GM12878 (cell line): ENCODE measurements at regions of chr14 and their contacts with region 1.

Region 1: DNA sequence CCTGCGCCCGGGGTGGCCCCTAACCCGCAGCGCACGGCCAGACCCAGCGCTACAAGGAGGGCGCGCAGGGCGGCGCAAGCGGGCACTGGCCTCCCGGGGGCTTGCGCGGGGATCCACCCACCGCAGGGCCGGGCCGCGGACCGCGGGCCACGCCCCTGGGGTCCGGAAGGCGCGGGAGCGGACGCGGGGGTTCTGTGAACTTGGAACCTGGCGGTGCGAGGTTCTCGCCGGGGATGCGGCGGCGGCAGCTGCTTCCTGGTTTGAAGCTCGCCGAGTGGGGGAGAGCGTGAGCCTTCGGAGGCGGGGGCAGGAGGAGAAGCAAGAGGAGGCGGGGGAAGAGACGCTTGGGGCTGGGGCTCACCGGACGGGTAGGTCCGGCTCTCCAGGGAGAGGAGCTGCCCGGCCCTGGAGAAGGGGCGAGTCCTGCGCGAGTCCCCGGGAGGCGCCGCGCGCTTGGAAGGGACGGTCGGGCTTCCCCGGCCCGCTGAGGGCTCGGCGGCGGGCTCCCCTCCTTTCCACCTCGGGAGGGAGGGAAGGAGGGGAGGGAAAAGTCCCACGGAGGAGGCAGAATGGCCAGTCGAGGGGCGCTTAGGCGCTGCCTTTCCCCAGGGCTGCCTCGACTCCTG is at the start of gene PRKCH:
- DNase-seq: no peak
- ATAC-seq: peak; percentile 81
- H3K4me3 ChIP-seq: peak within 1 kb of the TSS; percentile 95
- H3K27ac ChIP-seq: peak within 1 kb of the TSS; percentile 80
- H3K4me1 ChIP-seq: peaks cover 6% of the 10 kb centered on the region; the same call in 1 of the 2 replicates
- H3K27me3 ChIP-seq: no peaks in the 10 kb centered on the region; a peak in 1 of 4 replicates
- CTCF ChIP-seq: peak; percentile 3 to 50 (median 20); a peak in 3 of 6 replicates
- EP300 ChIP-seq: no peak
- POLR2A ChIP-seq: peak; percentile 84
- RAD21 ChIP-seq: peak; percentile 41
- polyA plus RNA-seq, gene PRKCH: 10.7 to 12.0 TPM

Region 2: DNA sequence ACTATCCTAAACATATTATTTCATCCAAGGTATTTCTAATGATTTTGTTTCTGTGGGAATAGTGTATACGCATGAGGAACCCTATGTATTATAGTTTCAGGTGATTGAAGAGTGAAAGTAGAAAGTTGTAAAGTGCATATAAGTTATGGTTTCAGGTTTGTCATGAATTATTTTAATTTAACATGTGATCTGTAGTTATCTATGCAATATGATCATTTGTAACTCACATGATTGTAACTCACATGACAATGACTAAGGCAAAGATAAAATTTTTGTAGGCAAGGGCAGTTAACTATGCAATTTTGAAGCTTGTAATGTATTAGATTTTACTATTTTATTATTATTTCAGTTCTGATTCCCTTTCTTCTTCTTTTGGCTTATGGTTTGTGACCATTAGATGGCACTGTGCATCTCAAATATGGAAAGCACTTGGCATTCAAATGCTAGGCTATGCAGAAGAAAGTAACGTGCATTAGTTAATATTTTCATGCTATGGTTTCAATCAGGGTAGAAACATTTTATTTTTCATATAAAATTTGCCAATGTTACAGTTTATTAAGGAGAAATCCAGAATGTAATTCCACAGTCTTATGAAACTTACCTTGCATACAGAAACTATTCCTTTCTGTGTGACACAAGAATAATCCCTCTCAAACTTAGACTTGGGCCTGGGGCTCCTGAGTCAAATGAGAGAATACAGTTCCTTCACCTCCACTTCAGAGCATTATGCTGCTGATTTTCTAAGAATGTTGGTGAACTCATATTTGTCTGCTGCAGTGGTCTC is 24.6 kb before region 1 on chr14:
- CTCF ChIA-PET with region 1: interaction called, 6 read pairs
- POLR2A ChIA-PET with region 1: interaction called, 3 read pairs
- RAD21 ChIA-PET with region 1: interaction called, 12 read pairs
- SMC1A ChIA-PET with region 1: interaction called, 5 read pairs
- in situ Hi-C with region 1: no loop called
- intact Hi-C with region 1: no loop called
- DNase-seq: peak; percentile 23
- ATAC-seq: peak; percentile 89
- H3K4me3 ChIP-seq: no peak overlapping the region
- H3K27ac ChIP-seq: no peak overlapping the region
- H3K4me1 ChIP-seq: peaks cover 12% of the 10 kb centered on the region
- H3K27me3 ChIP-seq: no peaks in the 10 kb centered on the region
- CTCF ChIP-seq: peak; percentile 50 to 66 (median 65)
- EP300 ChIP-seq: no peak
- POLR2A ChIP-seq: no peak
- RAD21 ChIP-seq: peak; percentile 89

Region 3: DNA sequence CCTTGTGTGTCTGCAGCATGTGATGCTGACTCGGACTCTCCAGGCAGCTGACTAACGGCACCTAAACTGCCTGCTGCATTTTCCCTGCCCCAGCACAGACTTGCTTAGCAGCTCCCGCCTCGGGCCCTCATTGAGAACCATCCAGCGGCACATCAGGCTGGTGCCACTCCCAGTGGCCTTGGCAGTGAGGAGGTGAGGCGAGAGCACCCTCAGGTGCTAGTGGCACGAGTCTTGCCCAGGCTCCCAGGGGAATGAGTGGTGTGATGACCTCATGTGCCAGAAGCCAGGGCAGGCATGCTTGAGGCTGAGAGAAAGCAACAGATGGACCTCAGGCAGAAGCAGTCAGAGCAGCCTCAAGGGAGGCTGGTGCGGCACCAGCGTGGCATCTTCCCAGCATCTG is 60.0 kb after region 1 on chr14:
- CTCF ChIA-PET with region 1: interaction called, 3 read pairs
- POLR2A ChIA-PET with region 1: interaction called, 38 read pairs
- RAD21 ChIA-PET with region 1: interaction called, 62 read pairs
- SMC1A ChIA-PET with region 1: interaction called, 64 read pairs
- in situ Hi-C with region 1: no loop called
- intact Hi-C with region 1: no loop called
- DNase-seq: no peak
- ATAC-seq: peak; percentile 5
- H3K4me3 ChIP-seq: no peak overlapping the region
- H3K27ac ChIP-seq: no peak overlapping the region; the same call in 1 of the 2 replicates
- H3K4me1 ChIP-seq: peaks cover 55% of the 10 kb centered on the region
- H3K27me3 ChIP-seq: no peaks in the 10 kb centered on the region
- CTCF ChIP-seq: no peak
- EP300 ChIP-seq: no peak
- POLR2A ChIP-seq: no peak
- RAD21 ChIP-seq: no peak

Region 4: DNA sequence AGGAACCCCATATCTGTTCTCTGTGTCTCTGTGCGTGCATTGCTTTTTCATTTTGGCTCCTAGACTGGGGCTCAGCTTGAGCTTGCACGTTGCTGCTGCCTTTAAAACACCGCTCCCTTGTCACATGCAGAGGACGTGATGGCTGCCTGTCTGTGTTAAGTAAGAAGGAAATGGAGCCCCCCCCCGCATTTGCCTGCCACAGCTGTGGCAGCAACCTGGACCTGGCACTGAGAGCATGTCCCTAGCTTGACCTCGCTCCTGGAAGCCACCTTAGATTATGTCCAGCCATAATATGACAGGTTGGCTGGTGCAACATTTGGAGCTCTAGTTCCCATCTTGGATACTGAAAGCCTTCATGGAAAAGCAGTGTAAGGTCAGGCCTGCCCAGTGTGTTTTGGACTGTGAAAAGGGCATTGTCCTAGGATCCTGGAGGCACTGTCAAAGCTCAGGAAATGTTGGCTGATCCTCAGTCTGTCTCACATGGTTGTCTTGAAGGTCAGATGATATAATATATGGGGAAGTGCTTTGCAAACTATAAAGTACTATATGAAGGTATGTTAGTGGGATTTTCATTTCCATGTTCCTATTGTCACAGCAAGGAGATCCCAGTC is 73.7 kb after region 1 on chr14:
- CTCF ChIA-PET with region 1: interaction called, 6 read pairs
- POLR2A ChIA-PET with region 1: interaction called, 38 read pairs
- RAD21 ChIA-PET with region 1: interaction called, 62 read pairs
- SMC1A ChIA-PET with region 1: interaction called, 64 read pairs
- in situ Hi-C with region 1: no loop called
- intact Hi-C with region 1: no loop called
- DNase-seq: no peak
- ATAC-seq: no peak
- H3K4me3 ChIP-seq: no peak overlapping the region
- H3K27ac ChIP-seq: no peak overlapping the region
- H3K4me1 ChIP-seq: peaks cover 22% of the 10 kb centered on the region
- H3K27me3 ChIP-seq: no peaks in the 10 kb centered on the region
- CTCF ChIP-seq: no peak
- EP300 ChIP-seq: no peak
- POLR2A ChIP-seq: no peak
- RAD21 ChIP-seq: no peak

Region 5: DNA sequence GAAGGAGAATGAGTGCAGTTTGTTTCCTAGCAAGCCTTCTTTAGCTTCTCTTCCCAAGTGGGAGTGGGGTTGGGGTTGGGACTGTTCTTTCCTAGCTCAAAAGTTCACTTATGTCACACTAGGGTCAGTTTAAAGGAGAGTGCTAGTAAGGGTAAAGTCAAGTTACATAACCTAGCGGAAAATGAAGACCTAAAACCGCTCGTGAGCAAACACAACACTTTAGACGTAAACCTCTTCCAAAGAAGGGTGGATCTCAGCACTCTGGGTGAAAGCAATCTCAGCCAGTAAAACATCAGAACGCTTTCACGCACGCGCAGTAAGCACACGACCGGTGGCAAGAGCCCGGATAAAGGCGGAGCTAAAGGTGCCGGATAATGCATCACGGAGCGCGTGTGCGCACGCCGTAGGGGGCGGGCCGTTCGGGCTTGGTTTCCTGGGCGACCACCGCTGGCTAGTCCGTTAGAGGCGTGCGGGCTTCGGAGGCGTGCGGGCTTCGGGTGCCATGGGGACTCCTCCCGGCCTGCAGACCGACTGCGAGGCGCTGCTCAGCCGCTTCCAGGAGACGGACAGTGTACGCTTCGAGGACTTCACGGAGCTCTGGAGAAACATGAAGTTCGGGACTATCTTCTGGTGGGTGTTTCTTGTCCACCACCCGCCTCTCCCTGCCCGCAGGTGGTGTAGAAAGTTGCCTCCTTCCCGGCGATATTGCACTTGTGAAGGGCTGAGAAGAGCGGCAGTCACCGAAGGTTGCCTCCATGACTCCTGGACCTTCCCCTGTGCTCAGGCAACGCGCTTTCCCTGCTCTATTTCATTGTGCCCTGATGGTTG is 440.7 kb after region 1 on chr14 and contains the start of gene SNAPC1:
- CTCF ChIA-PET with region 1: no interaction called
- POLR2A ChIA-PET with region 1: no interaction called
- RAD21 ChIA-PET with region 1: no interaction called
- SMC1A ChIA-PET with region 1: no interaction called
- in situ Hi-C with region 1: no loop called
- intact Hi-C with region 1: loop called (anchors 5 kb)
- DNase-seq: peak; percentile 96
- ATAC-seq: peak; percentile 99
- H3K4me3 ChIP-seq: peak within 1 kb of the TSS; percentile 98
- H3K27ac ChIP-seq: peak within 1 kb of the TSS; percentile 87
- H3K4me1 ChIP-seq: no peaks in the 10 kb centered on the region; the same call in 1 of the 2 replicates
- H3K27me3 ChIP-seq: no peaks in the 10 kb centered on the region
- CTCF ChIP-seq: no peak
- EP300 ChIP-seq: no peak
- POLR2A ChIP-seq: peak; percentile 93
- RAD21 ChIP-seq: no peak
- polyA plus RNA-seq, gene SNAPC1: 5.2 to 7.0 TPM